ENCODE measurements at regions of chr12 and their contacts with region 1.

Region 1: GRCh38 chr12:54993161-54993835 is 8.7 kb upstream of the TESPA1 start:
- DNase-seq: peak; percentile 20
- H3K4me3 ChIP-seq: no peak overlapping the region
- H3K27ac ChIP-seq: no peak overlapping the region
- H3K27me3 ChIP-seq: no peaks in the 10 kb centered on the region
- CTCF ChIP-seq: peak; percentile 82

Region 2: DNA sequence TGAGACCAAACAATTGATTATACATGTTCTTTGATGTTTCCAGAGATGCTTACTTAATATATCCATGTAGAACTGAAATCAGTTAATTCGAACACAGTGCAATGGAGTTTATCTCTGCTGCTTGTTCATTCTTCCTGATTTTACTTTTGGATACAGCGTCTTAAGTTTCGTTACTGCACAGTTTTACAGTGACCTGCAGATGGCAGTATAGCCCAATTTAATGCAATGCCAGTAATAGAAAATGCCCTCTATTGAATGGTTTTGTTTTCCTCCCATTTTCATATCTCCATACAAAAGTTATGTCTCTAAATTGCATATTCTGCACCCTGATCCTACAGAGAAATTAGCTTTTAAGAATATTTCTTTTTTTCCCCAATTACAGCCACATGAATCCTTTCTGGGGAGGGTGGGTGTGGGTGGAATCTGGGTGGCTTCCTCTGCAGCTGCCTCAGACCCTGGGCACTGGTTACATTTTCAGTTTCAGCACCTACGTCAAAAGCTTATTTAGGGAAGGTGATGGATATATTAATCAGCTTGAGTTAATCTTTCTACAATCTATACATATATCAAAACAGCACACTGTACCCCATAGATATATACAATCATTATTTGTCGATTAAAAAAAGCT is 244.0 kb before region 1 on chr12:
- CTCF ChIA-PET with region 1: interaction called, 13 read pairs
- POLR2A ChIA-PET with region 1: no interaction called
- DNase-seq: peak; percentile 15
- H3K4me3 ChIP-seq: no peak overlapping the region
- H3K27ac ChIP-seq: no peak overlapping the region
- H3K27me3 ChIP-seq: no peaks in the 10 kb centered on the region
- CTCF ChIP-seq: peak; percentile 75

Region 3: GRCh38 chr12:54870604-54871003 is 122.7 kb before region 1 on chr12:
- CTCF ChIA-PET with region 1: no interaction called
- POLR2A ChIA-PET with region 1: no interaction called
- DNase-seq: no peak
- H3K4me3 ChIP-seq: no peak overlapping the region
- H3K27ac ChIP-seq: no peak overlapping the region
- H3K27me3 ChIP-seq: no peaks in the 10 kb centered on the region
- CTCF ChIP-seq: no peak

Region 4: DNA sequence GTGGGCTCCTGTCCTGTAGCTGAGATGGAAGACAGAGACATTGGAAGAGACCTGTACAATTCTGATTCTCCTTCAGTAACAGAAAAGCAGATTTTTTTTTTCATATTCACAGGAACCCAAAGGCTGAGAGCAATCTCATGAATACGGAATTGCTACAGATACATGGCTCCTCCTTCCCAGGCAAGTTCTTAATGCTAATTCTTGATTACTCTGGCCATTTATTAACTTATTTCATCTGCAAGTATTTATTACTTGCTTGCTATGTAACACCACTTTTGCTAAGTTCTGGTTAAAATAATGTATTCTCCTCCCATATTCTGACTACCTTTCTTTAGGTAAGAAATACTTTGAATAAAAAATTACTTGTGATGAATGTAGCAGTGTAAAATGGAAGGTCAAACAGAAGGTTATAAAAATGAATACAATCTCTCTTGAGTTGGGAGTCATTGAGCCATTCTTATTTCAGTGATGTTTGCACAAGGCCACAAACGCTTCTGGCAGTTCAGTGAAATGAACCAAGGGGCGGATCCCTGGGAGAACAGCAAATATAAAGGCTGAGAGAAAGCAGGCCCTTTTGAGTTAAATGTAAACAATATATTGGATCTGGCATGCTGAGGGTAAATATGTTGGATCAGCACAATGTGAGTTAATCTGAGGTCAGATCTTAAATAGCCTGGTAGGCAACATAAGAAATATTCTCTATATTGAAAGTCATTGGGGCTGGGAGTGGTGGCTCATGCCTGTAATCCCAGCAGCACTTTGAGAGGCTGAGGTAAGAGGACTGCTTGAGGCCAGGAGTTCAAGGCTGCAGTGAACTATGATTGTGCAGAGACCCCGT is 101.4 kb before region 1 on chr12:
- CTCF ChIA-PET with region 1: no interaction called
- POLR2A ChIA-PET with region 1: no interaction called
- DNase-seq: no peak
- H3K4me3 ChIP-seq: no peak overlapping the region
- H3K27ac ChIP-seq: no peak overlapping the region
- H3K27me3 ChIP-seq: no peaks in the 10 kb centered on the region
- CTCF ChIP-seq: no peak

Region 5: GRCh38 chr12:54977155-54977554 is 16.1 kb before region 1 on chr12:
- CTCF ChIA-PET with region 1: interaction called, 41 read pairs
- POLR2A ChIA-PET with region 1: no interaction called
- DNase-seq: no peak
- H3K4me3 ChIP-seq: no peak overlapping the region
- H3K27ac ChIP-seq: no peak overlapping the region
- H3K27me3 ChIP-seq: no peaks in the 10 kb centered on the region
- CTCF ChIP-seq: no peak

Region 6: DNA sequence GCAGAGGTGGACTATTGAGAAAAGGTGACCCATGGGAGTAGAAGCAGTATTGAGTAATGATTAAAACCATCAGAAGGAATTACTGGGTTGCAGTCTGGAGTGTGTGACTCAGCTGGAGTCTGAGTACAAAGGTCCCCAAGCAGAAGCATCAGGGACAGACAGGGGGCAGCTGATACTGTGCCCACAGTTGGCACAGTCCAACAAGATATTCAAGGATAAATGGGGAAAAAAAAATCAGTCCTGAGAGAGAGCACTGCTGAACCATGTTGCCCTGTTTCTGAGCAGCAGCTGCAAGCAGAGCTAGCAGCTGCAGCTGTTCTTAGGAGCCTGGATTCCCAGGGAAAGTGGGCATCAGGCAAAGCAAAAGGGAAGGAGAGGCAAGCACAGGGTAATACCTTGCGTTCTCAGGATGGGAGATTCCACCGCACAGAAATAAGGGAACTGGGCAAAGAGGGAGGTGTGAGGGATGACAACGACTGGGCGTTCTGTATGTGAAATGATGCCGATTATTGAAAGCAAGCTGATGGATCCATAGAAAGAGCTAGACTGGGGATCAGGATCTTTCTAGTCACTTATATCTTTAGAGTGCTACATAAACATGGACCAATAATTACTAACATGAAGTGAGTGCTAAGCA is 44.2 kb after region 1 on chr12:
- CTCF ChIA-PET with region 1: interaction called, 16 read pairs
- POLR2A ChIA-PET with region 1: no interaction called
- DNase-seq: no peak
- H3K4me3 ChIP-seq: no peak overlapping the region
- H3K27ac ChIP-seq: no peak overlapping the region
- H3K27me3 ChIP-seq: no peaks in the 10 kb centered on the region
- CTCF ChIP-seq: no peak

Region 7: GRCh38 chr12:55057481-55057880 is 64.2 kb after region 1 on chr12:
- CTCF ChIA-PET with region 1: interaction called, 20 read pairs
- POLR2A ChIA-PET with region 1: no interaction called
- DNase-seq: no peak
- H3K4me3 ChIP-seq: no peak overlapping the region
- H3K27ac ChIP-seq: no peak overlapping the region
- H3K27me3 ChIP-seq: no peaks in the 10 kb centered on the region
- CTCF ChIP-seq: no peak

Region 8: GRCh38 chr12:55073043-55074022 is 80.0 kb after region 1 on chr12:
- CTCF ChIA-PET with region 1: interaction called, 254 read pairs
- POLR2A ChIA-PET with region 1: no interaction called
- DNase-seq: peak; percentile 41
- H3K4me3 ChIP-seq: no peak overlapping the region
- H3K27ac ChIP-seq: no peak overlapping the region
- H3K27me3 ChIP-seq: no peaks in the 10 kb centered on the region
- CTCF ChIP-seq: peak; percentile 90

Measured in AG04450 (cell line).